PC-9 (cell line): ENCODE measurements at regions of chr6 and their contacts with region 1.

Region 1: GRCh38 chr6:25070547-25071366 is 135.0 kb upstream of the RIPOR2 start:
- DNase-seq: peak; percentile 67 to 76
- H3K4me3 ChIP-seq: no peak overlapping the region
- H3K27ac ChIP-seq: no peak overlapping the region
- H3K4me1 ChIP-seq: no peaks in the 10 kb centered on the region
- H3K27me3 ChIP-seq: no peaks in the 10 kb centered on the region
- CTCF ChIP-seq: peak; percentile 94

Region 2: GRCh38 chr6:24359640-24360454 is 710.9 kb before region 1 on chr6:
- CTCF ChIA-PET with region 1: no interaction called
- POLR2A ChIA-PET with region 1: no interaction called
- intact Hi-C with region 1: loop called (anchors 10 kb)
- DNase-seq: peak; percentile 83 to 89
- H3K4me3 ChIP-seq: peak overlapping the region; percentile 63
- H3K27ac ChIP-seq: peak overlapping the region; percentile 14; the same call in 1 of the 2 replicates
- H3K4me1 ChIP-seq: peaks cover 8% of the 10 kb centered on the region
- H3K27me3 ChIP-seq: no peaks in the 10 kb centered on the region
- CTCF ChIP-seq: peak; percentile 95

Region 3: DNA sequence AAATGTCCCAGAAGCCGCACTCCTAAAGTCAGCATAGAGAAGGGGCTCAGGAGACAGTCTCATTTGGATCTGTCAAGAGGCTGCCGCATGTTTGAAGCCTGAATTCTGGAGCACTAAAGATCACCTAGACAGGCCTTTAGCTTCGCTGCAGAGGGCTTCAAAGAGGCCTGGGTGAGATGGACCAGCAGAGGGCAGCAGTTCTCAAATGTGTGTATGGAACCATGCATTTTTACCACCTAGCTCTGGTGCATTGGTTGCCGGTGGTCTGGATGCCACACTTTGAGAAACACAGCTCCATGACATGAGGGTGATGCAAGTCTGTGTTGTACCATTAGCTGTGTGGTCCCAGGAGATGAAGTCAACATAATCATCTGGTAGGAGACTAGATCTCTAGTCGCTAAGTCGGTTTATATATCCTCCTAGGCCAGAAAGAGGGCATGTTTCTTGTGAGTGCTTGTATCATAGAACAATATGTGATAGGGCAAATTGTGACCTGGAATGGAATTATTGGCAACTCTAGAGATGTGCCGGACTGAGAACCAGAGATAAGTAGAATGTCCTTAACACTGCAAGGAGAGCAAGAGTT is 489.6 kb before region 1 on chr6:
- CTCF ChIA-PET with region 1: interaction called, 3 read pairs
- POLR2A ChIA-PET with region 1: no interaction called
- intact Hi-C with region 1: loop called (anchors 2 kb)
- DNase-seq: peak in 1 of 2 experiments; percentile 60
- H3K4me3 ChIP-seq: no peak overlapping the region
- H3K27ac ChIP-seq: no peak overlapping the region
- H3K4me1 ChIP-seq: peaks cover 26% of the 10 kb centered on the region
- H3K27me3 ChIP-seq: no peaks in the 10 kb centered on the region
- CTCF ChIP-seq: peak; percentile 88

Region 4: DNA sequence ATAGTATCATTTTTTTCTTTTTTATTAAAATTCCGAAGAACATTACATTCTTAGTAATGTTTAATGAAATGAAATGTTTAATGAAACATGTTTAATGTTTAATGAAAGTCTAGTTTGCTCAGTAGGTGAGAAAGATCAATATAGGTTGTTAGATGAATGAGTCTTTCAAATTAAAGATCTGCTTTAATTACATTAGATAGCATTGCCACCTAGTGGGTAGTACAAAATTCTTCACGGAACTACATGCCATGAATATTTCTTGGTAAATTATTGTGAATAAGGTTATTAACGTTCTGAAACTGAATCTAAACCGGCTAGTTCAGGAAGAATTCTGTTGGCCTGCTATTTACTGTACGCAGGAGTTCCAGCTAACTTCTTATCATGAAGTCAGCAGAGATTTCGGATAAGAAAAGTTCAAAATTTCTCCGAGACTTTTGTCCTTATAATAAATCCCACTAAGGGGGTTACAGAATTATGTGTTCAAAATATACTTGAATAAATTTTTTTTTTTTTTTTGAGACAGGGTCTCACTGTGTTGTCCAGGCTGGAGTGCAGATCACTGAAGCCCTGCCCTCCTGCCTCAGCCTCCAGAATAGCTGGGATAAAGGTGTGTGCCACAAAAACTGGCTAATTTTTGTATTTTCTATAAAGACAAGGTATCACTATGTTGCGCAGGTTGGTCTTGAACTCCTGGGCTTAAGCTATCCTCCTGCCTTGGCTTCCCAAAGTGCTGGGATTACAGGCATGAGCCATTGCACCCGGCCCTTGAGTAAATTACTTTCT is 303.9 kb before region 1 on chr6:
- CTCF ChIA-PET with region 1: no interaction called
- POLR2A ChIA-PET with region 1: interaction called, 4 read pairs
- intact Hi-C with region 1: loop called (anchors 2 kb)
- DNase-seq: peak in 1 of 2 experiments; percentile 52
- H3K4me3 ChIP-seq: no peak overlapping the region
- H3K27ac ChIP-seq: no peak overlapping the region
- H3K4me1 ChIP-seq: no peaks in the 10 kb centered on the region
- H3K27me3 ChIP-seq: no peaks in the 10 kb centered on the region
- CTCF ChIP-seq: peak; percentile 75

Region 5: GRCh38 chr6:25017932-25018567 is 52.7 kb before region 1 on chr6:
- CTCF ChIA-PET with region 1: interaction called, 4 read pairs
- POLR2A ChIA-PET with region 1: interaction called, 5 read pairs
- intact Hi-C with region 1: loop called (anchors 2 kb)
- DNase-seq: peak; percentile 59 to 83
- H3K4me3 ChIP-seq: 0 out of 2 replicates have a peak overlapping the region, but pooled peaks have one; percentile 6
- H3K27ac ChIP-seq: peak overlapping the region; percentile 74
- H3K4me1 ChIP-seq: peaks cover 38% of the 10 kb centered on the region
- H3K27me3 ChIP-seq: no peaks in the 10 kb centered on the region
- CTCF ChIP-seq: peak; percentile 88

Region 6: DNA sequence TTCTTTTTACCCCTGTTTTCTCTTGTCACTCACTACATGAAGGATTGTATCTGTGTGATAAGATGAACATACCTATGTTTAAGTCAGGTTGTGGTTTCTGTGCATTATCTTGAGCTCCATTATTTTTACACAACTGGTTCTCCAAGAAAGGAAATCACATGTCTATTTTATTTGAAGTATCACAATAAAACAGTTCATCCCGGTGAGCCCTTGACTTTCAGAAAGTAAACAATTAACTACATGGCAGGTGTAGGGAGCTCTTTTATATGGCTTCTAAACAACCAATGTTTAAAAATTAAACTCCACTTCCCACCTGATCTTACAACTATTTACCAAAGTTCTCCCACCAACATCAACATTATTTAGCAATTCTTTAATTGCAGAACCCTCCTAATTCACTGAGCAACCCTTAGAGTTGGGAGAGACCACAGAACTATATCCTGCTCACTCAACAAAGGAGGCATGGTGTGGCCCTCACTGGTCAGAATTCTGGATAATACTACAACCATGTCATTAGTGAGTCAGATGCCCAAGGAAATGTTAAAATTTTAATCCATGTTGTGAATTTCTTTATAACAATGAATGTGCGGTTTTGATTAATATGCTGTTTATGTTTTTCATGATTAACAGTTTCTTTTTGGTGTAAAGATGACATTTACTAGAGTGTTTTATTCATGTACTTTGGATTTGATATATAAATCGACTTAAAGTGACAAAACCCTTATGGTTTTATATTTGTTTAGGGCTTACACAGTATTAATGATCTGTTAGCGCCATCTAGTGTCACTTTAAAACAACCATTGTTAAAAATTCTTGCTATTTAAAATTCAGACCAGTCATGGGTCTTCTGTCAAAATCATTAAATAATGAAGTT is 531.3 kb after region 1 on chr6:
- CTCF ChIA-PET with region 1: no interaction called
- POLR2A ChIA-PET with region 1: no interaction called
- intact Hi-C with region 1: loop called (anchors 1 kb)
- DNase-seq: peak in 1 of 2 experiments; percentile 43
- H3K4me3 ChIP-seq: no peak overlapping the region
- H3K27ac ChIP-seq: no peak overlapping the region
- H3K4me1 ChIP-seq: no peaks in the 10 kb centered on the region
- H3K27me3 ChIP-seq: no peaks in the 10 kb centered on the region
- CTCF ChIP-seq: peak; percentile 85

Region 7: GRCh38 chr6:25889877-25890853 is 819.4 kb after region 1 on chr6:
- CTCF ChIA-PET with region 1: no interaction called
- POLR2A ChIA-PET with region 1: no interaction called
- intact Hi-C with region 1: no loop called
- DNase-seq: peak; percentile 42
- H3K4me3 ChIP-seq: no peak overlapping the region
- H3K27ac ChIP-seq: no peak overlapping the region
- H3K4me1 ChIP-seq: no peaks in the 10 kb centered on the region
- H3K27me3 ChIP-seq: no peaks in the 10 kb centered on the region
- CTCF ChIP-seq: peak; percentile 72